ENCODE measurements at regions of chr7 and their contacts with region 1.

Region 1: GRCh38 chr7:23357190-23358093 is 58.3 kb downstream of the MALSU1 start:
- DNase-seq: peak; percentile 43
- ATAC-seq: peak; percentile 76
- H3K4me3 ChIP-seq: no peak overlapping the region
- H3K27ac ChIP-seq: peak overlapping the region; percentile 64
- H3K4me1 ChIP-seq: peaks cover 68 to 72% of the 10 kb centered on the region in 2 experiments
- H3K27me3 ChIP-seq: no peaks in the 10 kb centered on the region
- CTCF ChIP-seq: peak in 2 of 3 experiments; percentile 58 to 61; a peak in 3 of 6 replicates
- POLR2A ChIP-seq: no peak
- RAD21 ChIP-seq: peak; percentile 78

Region 2: GRCh38 chr7:23175938-23176337 is 181.5 kb before region 1 on chr7:
- CTCF ChIA-PET with region 1: no interaction called
- POLR2A ChIA-PET with region 1: no interaction called
- RAD21 ChIA-PET with region 1: no interaction called
- intact Hi-C with region 1: no loop called
- DNase-seq: no peak
- ATAC-seq: no peak
- H3K4me3 ChIP-seq: no peak overlapping the region
- H3K27ac ChIP-seq: no peak overlapping the region
- H3K4me1 ChIP-seq: peaks cover under 1% of the 10 kb centered on the region in 2 experiments; a peak in 2 of 4 replicates
- H3K27me3 ChIP-seq: no peaks in the 10 kb centered on the region
- CTCF ChIP-seq: no peak
- POLR2A ChIP-seq: no peak
- RAD21 ChIP-seq: no peak

Region 3: DNA sequence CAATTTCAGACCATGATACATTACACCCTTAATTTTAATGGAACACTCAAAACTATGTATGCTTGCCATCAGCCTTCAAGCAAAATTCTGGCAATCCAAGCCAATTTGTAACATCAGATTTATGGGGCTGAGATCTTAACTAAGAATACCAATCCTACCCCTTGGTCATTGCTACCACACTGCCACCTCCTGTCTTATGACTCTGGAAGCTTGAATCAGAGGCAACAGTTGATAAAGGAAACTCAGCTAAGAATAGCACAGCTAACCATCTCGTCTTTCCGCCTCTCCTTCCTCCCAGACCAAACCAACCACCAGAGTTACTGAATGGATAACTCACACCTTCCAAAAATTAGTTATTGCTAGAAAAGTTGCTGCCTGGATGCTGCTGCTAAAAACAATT is 105.4 kb after region 1 on chr7:
- CTCF ChIA-PET with region 1: no interaction called
- POLR2A ChIA-PET with region 1: no interaction called
- RAD21 ChIA-PET with region 1: no interaction called
- intact Hi-C with region 1: loop called (anchors 2 kb)
- DNase-seq: no peak
- ATAC-seq: no peak
- H3K4me3 ChIP-seq: no peak overlapping the region
- H3K27ac ChIP-seq: no peak overlapping the region
- H3K4me1 ChIP-seq: peaks cover 44 to 49% of the 10 kb centered on the region in 2 experiments
- H3K27me3 ChIP-seq: no peaks in the 10 kb centered on the region
- CTCF ChIP-seq: peak; percentile 12 to 45 (median 17); a peak in 3 of 6 replicates
- POLR2A ChIP-seq: no peak
- RAD21 ChIP-seq: peak; percentile 57

Measured in HCT116 (cell line).